GM23248 (cell line): ENCODE measurements at regions of chrX and their contacts with region 1.

Region 1: GRCh38 chrX:111869639-111870034 is 6.3 kb upstream of the TRPC5OS start:
- DNase-seq: peak; percentile 55
- H3K4me3 ChIP-seq: no peak overlapping the region
- H3K27ac ChIP-seq: no peak overlapping the region
- H3K4me1 ChIP-seq: no peaks in the 10 kb centered on the region
- H3K27me3 ChIP-seq: no peaks in the 10 kb centered on the region

Region 2: DNA sequence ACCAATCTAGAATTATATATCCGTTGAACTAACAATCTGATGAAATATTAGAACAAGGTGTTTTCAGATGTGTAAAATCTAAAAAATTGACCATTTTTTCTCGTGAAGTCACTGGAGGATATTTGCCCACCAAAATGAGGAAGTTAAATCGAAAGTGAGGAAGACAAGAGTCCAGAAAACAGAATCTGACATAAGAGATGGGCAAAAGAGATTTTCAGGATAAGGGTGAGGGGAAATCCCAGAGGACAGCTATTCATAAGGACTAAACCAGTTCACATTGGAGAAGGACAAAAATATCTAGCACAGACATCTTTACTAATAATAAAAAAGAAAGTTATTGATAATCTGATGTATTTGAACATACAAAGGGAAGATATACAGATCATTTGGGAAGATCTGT is 207.3 kb before region 1 on chrX:
- in situ Hi-C with region 1: no loop called
- DNase-seq: no peak
- H3K4me3 ChIP-seq: no peak overlapping the region
- H3K27ac ChIP-seq: no peak overlapping the region
- H3K4me1 ChIP-seq: no peaks in the 10 kb centered on the region
- H3K27me3 ChIP-seq: no peaks in the 10 kb centered on the region

Region 3: GRCh38 chrX:112164420-112164819 is 294.8 kb after region 1 on chrX:
- in situ Hi-C with region 1: no loop called
- DNase-seq: no peak
- H3K4me3 ChIP-seq: no peak overlapping the region
- H3K27ac ChIP-seq: no peak overlapping the region
- H3K4me1 ChIP-seq: no peaks in the 10 kb centered on the region
- H3K27me3 ChIP-seq: no peaks in the 10 kb centered on the region

Region 4: GRCh38 chrX:112642349-112642748 is 772.7 kb after region 1 on chrX:
- in situ Hi-C with region 1: loop called (anchors 25 kb)
- DNase-seq: peak; percentile 63
- H3K4me3 ChIP-seq: no peak overlapping the region
- H3K27ac ChIP-seq: no peak overlapping the region
- H3K4me1 ChIP-seq: peaks cover 19% of the 10 kb centered on the region
- H3K27me3 ChIP-seq: no peaks in the 10 kb centered on the region